ENCODE measurements at regions of chr3 and their contacts with region 1.

Region 1: GRCh38 chr3:43690400-43691119 is at the start of gene ABHD5:
- DNase-seq: peak; percentile 92
- ATAC-seq: peak; percentile 82
- H3K4me3 Mint-ChIP-seq: peak within 1 kb of the TSS; percentile 88
- H3K27ac Mint-ChIP-seq: peak within 1 kb of the TSS; percentile 86
- H3K4me1 Mint-ChIP-seq: peaks cover 28% of the 10 kb centered on the region
- H3K27me3 Mint-ChIP-seq: no peaks in the 10 kb centered on the region
- CTCF ChIP-seq: no peak
- total RNA-seq, gene ABHD5: 6.0 and 8.0 TPM in 2 replicates

Region 2: DNA sequence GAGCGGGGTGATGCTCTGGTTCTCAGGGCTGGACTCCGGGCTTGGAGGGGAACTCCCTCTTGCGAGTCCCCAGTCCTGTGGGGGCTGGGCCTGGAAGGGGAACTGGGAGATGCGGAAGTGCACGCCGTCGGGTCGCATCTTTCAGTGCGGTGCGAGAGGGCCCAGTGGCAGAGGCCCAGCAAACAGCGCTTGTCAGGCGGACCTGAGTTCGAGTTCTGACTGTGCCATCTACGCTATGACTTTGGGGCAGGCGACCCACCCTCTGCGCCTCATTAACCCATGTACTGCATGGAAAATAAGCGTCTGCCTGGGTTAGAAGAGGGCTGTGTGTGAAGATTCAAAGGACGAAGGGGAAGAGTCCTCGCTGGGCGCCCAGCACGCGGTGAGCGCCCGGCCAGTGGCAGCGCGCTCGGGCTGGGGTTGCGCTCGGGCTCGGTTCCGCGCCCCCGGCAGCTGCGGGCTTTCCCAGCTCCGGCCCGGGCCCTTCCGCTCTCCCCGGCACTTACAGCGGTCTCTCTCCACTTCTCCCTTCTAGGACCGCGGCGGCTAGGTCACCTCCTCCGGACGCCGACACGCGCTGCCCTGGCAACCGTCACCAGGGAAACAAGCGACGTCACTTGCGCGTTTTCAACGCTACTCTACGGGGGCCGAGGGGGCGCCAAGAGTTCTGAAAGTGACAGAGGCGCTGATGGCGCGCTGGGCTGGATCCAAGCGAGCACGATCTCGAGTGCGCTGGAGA is 917.7 kb before region 1 on chr3 and contains the start of gene CCDC13:
- CTCF ChIA-PET with region 1: no interaction called
- POLR2A ChIA-PET with region 1: no interaction called
- intact Hi-C with region 1: loop called (anchors 10 kb)
- DNase-seq: peak; percentile 97
- ATAC-seq: peak; percentile 90
- H3K4me3 Mint-ChIP-seq: peak within 1 kb of the TSS; percentile 90
- H3K27ac Mint-ChIP-seq: peak within 1 kb of the TSS; percentile 89
- H3K4me1 Mint-ChIP-seq: peaks cover 13% of the 10 kb centered on the region
- H3K27me3 Mint-ChIP-seq: no peaks in the 10 kb centered on the region
- CTCF ChIP-seq: no peak
- total RNA-seq, gene CCDC13: 1.7 and 1.9 TPM in 2 replicates

Region 3: GRCh38 chr3:43621656-43622432 is 68.7 kb before region 1 on chr3 and contains the start of gene ANO10:
- CTCF ChIA-PET with region 1: no interaction called
- POLR2A ChIA-PET with region 1: interaction called, 11 read pairs
- intact Hi-C with region 1: loop called (anchors 1 kb)
- DNase-seq: peak; percentile 98
- ATAC-seq: peak; percentile 91
- H3K4me3 Mint-ChIP-seq: peak within 1 kb of the TSS; percentile 88
- H3K27ac Mint-ChIP-seq: peak within 1 kb of the TSS; percentile 77
- H3K4me1 Mint-ChIP-seq: peaks cover 13% of the 10 kb centered on the region
- H3K27me3 Mint-ChIP-seq: peaks cover 1% of the 10 kb centered on the region
- CTCF ChIP-seq: no peak
- total RNA-seq, gene ANO10: 6.4 and 8.1 TPM in 2 replicates

Region 4: DNA sequence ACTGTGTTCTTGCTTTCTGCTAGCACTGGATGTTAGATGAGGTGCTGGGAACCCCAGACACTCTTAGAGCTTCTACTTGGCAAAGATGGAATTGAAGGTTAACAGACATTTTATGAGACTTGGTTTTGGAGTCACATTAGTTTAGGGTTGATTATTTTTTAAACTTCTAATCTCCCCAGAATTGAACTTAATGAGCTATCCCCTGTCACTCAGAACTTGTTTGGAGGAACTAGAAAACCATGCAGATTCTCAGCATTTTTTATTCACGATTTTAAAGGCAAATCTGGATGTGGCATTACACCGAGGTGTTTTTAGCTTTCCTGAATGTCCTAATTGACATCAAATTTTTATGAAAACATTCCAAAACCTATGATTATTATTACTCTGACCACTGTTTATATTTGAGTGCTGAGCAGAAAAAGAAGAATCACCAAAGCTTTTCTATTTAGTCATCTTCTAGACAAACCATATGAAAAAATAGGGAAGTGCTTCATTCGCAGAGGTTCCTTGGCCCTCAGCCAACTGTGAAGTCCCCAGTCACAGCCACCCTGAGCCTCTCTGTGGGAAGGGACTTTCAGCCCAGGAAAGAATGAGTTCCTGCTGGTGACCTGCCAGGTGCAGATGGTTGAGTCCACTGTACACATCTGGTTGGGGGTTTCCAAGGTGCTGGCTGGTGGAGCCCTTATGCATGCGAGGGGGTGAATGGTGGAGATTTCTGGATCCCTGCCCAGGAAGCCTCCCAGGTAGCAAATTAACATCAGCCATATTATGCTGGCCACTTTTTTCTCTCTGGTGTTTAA is 355.1 kb after region 1 on chr3:
- CTCF ChIA-PET with region 1: no interaction called
- POLR2A ChIA-PET with region 1: no interaction called
- intact Hi-C with region 1: loop called (anchors 1 kb)
- DNase-seq: peak; percentile 66
- ATAC-seq: peak; percentile 95
- H3K4me3 Mint-ChIP-seq: peak overlapping the region; percentile 7
- H3K27ac Mint-ChIP-seq: peak overlapping the region; percentile 84
- H3K4me1 Mint-ChIP-seq: peaks cover 70% of the 10 kb centered on the region
- H3K27me3 Mint-ChIP-seq: no peaks in the 10 kb centered on the region
- CTCF ChIP-seq: no peak

Region 5: DNA sequence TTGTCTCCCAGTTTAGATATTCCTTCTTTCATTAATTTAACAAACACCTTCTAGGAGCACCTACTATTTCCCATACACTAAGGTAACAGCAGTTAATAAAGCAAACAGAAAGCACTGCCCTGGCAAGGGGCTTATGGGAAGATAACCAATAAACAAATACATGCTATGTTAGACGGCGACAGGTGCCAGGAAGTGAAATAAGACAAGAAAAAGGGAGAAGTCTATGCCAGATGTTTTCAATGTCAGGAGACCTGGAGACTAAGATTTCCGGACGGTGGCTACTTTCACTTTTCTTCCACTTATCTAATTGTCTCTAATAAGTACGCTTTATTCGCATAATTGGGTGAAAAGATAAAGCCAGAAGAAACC is 819.4 kb after region 1 on chr3:
- CTCF ChIA-PET with region 1: no interaction called
- POLR2A ChIA-PET with region 1: no interaction called
- intact Hi-C with region 1: loop called (anchors 5 kb)
- DNase-seq: no peak
- ATAC-seq: peak; percentile 30
- H3K4me3 Mint-ChIP-seq: peak overlapping the region; percentile 95
- H3K27ac Mint-ChIP-seq: peak overlapping the region; percentile 92
- H3K4me1 Mint-ChIP-seq: peaks cover 40% of the 10 kb centered on the region
- H3K27me3 Mint-ChIP-seq: no peaks in the 10 kb centered on the region
- CTCF ChIP-seq: no peak

Region 6: DNA sequence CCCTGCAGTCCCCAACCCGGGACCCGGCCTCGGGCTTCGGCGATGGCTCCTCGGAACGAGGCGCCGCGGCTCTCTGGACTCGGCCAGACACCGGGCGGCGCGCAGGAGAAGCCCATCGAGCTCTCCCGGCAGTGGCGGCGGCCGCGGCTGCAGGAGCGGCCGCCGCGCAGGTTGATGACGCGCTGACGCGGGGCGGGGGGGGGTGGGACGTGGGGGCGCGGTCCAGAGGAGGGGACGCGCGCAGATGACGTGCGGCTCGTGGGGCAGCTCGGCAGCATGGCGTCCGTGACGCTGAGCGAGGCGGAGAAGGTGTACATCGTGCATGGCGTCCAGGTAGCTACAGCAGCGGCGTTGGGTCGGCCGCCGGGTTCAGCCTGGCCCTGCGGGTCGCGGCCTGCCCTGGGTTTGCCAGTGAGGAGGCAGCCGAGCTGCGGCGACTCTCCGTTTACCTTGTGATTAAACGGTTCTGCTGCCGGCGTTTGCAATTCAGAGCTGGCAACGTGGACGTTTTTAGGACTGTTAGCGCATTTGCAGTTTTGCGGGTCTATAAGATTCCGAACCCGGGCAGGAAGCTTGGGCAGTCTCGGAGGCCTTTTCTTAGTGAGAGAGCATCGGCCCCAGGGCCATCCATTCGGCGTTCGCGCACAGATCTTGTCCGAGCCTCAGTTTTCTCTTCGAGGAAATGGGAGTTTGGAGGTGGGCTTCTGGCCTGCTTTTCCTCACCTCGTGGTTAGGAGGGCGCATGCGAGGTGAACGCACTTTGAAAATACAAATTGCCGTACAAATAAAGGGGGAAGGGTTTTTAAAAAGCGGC is 1285.6 kb after region 1 on chr3 and contains the starts of genes EXOSC7 and ZDHHC3:
- CTCF ChIA-PET with region 1: no interaction called
- POLR2A ChIA-PET with region 1: no interaction called
- intact Hi-C with region 1: loop called (anchors 5 kb)
- DNase-seq: peak; percentile 76
- ATAC-seq: peak; percentile 94
- H3K4me3 Mint-ChIP-seq: peak within 1 kb of the TSS; percentile 93
- H3K27ac Mint-ChIP-seq: peak within 1 kb of the TSS; percentile 88
- H3K4me1 Mint-ChIP-seq: peaks cover 49% of the 10 kb centered on the region
- H3K27me3 Mint-ChIP-seq: no peaks in the 10 kb centered on the region
- CTCF ChIP-seq: no peak
- total RNA-seq, gene EXOSC7: 42.5 and 44.0 TPM in 2 replicates
- total RNA-seq, gene ZDHHC3: 38.5 and 43.4 TPM in 2 replicates

Measured in activated B cell treated with CpG ODN at 0.5 μM for 24 hours (primary cell).